Colonic mucosa (tissue), 4 donors: ENCODE measurements at regions of chr11 and their contacts with region 1.

Region 1: DNA sequence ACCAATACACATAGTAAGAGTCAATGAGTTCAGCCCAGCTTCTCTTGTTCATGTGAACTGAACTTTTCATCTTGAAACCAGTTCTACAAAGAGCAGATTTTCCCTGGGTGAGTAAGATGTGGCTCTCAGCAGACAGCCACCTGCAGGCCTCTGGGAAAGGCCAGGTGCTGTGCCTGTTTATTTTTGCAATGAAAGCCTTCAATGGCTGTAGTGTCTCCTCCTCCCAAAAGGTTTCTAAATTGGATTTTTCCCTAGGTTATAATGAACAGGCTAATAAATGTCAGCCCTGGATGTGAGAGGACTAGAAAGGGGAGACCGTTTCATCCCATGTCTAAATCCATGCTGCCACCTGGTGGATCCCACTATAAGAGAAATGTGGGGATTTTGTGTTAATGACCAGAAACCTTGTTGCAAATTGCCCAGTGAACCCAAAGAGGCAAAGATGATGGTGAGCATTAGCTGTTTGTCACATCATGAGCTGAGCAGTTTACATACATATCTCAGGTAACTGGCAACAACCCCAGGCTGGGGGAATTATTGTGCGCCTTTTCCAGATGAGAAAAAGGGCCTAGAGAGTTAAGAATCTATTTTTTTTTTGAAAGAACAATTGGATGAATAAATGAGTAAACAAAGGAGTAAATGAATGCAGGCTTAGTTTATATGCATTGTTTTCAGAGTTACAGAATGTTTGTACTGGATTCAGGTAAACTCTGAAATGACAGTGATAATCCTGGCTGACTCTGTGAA is 12.7 kb downstream of the C11orf91 start:
- DNase-seq: peak; percentile 60
- H3K4me3 ChIP-seq: no peak overlapping the region
- H3K27ac ChIP-seq: no peak overlapping the region
- H3K4me1 ChIP-seq: peaks cover 12% of the 10 kb centered on the region
- H3K27me3 ChIP-seq: no peaks in the 10 kb centered on the region
- CTCF ChIP-seq: peak; percentile 60

Region 2: GRCh38 chr11:33542921-33543320 is 145.0 kb before region 1 on chr11:
- intact Hi-C with region 1: loop called (anchors 5 kb)
- DNase-seq: peak; percentile 49
- H3K4me3 ChIP-seq: no peak overlapping the region
- H3K27ac ChIP-seq: no peak overlapping the region
- H3K4me1 ChIP-seq: no peaks in the 10 kb centered on the region
- H3K27me3 ChIP-seq: no peaks in the 10 kb centered on the region
- CTCF ChIP-seq: peak; percentile 55